ENCODE measurements at regions of chr10 and their contacts with region 1.

Region 1: DNA sequence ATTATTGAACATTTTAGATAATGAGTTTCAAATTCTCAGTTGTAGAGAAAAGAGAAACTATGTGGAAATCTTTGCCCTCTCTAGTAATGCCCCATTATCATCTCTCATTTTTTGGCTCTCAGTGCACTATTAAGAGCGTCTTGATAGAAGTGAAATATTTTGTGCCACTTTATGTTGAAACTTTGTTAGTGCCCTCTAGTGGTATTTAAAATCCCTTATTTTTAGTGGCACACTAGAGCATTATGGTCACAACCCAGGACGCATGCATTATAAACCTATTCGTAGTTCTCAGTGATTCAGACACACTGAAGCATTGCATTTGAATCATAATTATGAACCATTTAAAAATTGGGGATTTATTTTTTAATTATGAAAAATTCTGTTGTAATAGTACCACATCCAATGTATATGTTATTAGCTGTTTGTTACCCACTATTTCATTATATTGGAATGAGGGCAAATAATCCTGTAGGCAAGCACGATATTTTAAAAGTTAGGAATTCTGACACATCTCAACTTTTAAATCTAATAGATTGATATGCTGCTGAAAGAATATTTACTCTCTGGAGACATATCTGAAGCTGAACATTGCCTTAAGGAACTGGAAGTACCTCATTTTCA is 21.9 kb downstream of the PDCD4 start:
- DNase-seq: no peak
- ATAC-seq: peak; percentile 81

Region 2: DNA sequence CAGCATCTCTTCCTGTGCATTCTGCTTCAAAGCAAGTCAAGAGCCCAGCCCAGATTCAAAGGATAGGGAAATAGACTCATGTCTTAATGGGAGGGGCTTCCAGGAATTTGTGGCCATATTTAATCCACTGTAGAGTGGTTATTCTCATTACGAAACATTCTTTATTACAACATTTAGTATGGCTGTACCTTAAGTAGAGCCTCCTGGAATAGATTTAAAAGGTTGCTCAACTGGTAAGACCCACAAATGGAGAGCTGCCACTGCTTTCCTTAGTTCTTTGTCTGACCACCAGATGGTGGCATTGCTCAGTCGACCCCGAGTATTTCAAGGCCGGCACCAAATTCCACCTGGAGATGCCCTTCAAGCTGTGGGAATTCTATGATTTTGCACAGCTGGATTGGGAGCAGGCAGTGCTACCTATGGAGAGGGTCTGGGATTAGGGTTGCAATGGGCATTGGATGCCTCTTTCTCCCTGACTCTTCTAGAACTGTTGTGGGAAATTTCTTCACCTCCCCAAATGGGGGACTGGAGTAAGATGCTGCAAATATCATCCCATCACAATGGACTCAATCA is 147.3 kb before region 1 on chr10:
- intact Hi-C with region 1: loop called (anchors 5 kb)
- DNase-seq: no peak
- ATAC-seq: peak; percentile 52

Region 3: GRCh38 chr10:110803830-110804338 is 89.8 kb before region 1 on chr10:
- intact Hi-C with region 1: loop called (anchors 10 kb)
- DNase-seq: no peak
- ATAC-seq: peak; percentile 60